ENCODE measurements at regions of chr1 and their contacts with region 1.

Region 1: DNA sequence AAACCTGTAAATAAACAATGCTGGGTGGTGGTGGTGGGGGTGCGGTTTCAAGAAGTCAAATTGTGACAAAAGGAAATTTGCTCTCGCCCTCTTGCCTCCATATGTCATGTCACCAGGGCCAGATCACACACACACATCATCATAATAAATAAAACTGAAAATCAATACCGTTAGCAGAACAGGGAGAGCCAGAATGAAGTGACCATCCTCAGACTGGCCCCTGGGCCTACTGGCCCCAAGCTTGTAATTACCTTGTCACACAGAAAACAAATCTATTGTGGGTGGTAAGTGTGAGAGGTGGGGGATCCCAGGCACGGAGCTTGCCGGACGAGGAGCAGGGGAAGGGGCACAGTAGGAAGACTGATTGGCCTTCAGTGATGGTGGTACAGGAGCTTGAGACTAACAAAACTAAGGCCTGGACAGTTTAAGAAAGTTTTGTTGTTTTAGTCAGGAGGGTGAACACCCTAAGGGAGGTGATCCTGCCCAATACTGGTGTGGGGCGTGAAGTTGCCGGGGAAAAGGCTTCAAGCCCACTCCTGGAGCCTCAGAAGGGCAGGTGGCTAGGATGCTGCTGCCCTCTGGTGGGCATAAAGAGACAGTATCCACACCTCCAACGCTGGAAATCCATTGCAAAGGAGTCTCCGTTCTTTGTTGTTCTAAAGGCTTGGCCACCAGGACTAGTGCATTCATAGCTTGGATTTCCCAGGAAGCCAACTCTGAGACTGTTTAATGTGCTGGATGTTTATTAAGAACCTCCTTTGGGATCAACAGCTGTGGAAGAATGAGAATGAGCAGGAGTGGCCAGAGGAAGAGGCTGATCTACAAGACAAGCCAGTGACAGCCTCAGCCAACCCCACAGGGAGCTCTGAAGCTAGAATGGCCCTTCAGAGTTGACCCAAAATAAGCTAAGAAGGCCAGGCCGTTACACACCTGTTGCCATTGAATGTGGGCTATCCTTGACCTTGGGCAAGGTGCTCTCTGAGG is 8.1 kb upstream of the C1orf216 start:
- DNase-seq: peak; percentile 43 to 59 (median 57)
- H3K4me3 ChIP-seq: no peak overlapping the region
- H3K4me3 Mint-ChIP-seq: no peak overlapping the region
- H3K27ac ChIP-seq: no peak overlapping the region
- H3K27ac Mint-ChIP-seq: peak overlapping the region in 2 of 7 donors; percentile 35 to 37
- H3K4me1 ChIP-seq: peaks cover 4% of the 10 kb centered on the region
- H3K4me1 Mint-ChIP-seq: peaks cover 0 to 6% (median 4%) of the 10 kb centered on the region in 4 donors
- H3K27me3 ChIP-seq: no peaks in the 10 kb centered on the region
- H3K27me3 Mint-ChIP-seq: no peaks in the 10 kb centered on the region

Region 2: DNA sequence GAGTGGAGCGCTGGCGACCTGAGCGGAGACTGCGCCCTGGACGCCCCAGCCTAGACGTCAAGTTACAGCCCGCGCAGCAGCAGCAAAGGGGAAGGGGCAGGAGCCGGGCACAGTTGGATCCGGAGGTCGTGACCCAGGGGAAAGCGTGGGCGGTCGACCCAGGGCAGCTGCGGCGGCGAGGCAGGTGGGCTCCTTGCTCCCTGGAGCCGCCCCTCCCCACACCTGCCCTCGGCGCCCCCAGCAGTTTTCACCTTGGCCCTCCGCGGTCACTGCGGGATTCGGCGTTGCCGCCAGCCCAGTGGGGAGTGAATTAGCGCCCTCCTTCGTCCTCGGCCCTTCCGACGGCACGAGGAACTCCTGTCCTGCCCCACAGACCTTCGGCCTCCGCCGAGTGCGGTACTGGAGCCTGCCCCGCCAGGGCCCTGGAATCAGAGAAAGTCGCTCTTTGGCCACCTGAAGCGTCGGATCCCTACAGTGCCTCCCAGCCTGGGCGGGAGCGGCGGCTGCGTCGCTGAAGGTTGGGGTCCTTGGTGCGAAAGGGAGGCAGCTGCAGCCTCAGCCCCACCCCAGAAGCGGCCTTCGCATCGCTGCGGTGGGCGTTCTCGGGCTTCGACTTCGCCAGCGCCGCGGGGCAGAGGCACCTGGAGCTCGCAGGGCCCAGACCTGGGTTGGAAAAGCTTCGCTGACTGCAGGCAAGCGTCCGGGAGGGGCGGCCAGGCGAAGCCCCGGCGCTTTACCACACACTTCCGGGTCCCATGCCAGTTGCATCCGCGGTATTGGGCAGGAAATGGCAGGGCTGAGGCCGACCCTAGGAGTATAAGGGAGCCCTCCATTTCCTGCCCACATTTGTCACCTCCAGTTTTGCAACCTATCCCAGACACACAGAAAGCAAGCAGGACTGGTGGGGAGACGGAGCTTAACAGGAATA is 149.4 kb before region 1 on chr1:
- CTCF ChIA-PET with region 1: interaction called, 50 read pairs
- POLR2A ChIA-PET with region 1: interaction called, 5 read pairs
- intact Hi-C with region 1: no loop called
- DNase-seq: peak; percentile 61 to 76 (median 71)
- H3K4me3 ChIP-seq: peak overlapping the region; percentile 42 to 50
- H3K4me3 Mint-ChIP-seq: peak overlapping the region; percentile 82 to 96 (median 88)
- H3K27ac ChIP-seq: peak overlapping the region; percentile 58
- H3K27ac Mint-ChIP-seq: peak overlapping the region; percentile 32 to 93 (median 77)
- H3K4me1 ChIP-seq: peaks cover 28% of the 10 kb centered on the region
- H3K4me1 Mint-ChIP-seq: peaks cover 10 to 31% (median 20%) of the 10 kb centered on the region in 4 donors
- H3K27me3 ChIP-seq: no peaks in the 10 kb centered on the region
- H3K27me3 Mint-ChIP-seq: peaks cover 1 to 2% of the 10 kb centered on the region in 2 donors

Region 3: DNA sequence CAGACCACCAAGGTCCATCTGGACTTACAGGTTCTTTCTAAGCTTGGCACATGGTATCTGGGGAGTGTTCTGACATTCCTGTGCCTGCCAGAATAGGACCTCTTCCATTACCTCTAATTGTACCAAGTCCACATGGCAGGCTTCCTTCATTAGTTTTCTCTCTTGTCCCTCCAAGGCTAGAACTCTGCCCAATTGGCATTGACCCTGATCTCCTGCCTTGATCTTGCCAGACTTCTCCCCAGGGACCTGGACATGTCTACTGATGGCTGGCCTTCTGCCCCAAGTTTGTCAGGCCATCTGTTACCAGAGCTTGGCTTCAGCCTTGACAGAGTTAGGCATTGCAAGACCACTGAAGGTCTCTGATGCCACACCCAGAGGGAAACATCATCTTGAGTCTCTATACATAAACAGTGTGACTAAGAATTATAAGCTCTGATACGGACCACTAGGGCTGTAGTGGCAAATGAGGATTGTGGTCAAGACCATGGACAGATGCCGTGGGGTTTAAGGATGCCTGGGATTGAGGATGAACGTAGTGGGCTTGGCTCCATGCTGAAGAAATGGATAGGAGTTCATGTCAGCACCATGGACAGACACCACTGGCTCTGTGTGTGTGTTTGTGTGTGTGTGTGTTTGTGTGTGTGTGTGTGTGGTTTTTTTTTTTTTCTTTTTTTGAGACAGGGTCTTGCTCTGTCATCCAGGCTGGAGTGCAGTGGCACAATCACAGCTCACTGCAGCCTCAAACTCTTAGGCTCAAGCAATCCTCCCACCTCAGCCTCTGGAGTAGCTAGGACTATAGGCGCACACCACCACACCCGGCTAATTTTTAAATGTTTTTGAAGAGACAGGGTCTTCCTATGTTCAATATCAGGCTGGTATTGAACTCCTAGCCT is 65.9 kb before region 1 on chr1:
- CTCF ChIA-PET with region 1: no interaction called
- POLR2A ChIA-PET with region 1: no interaction called
- intact Hi-C with region 1: no loop called
- DNase-seq: no peak
- H3K4me3 ChIP-seq: no peak overlapping the region
- H3K4me3 Mint-ChIP-seq: no peak overlapping the region
- H3K27ac ChIP-seq: no peak overlapping the region
- H3K27ac Mint-ChIP-seq: peak overlapping the region in 1 of 7 donors; percentile 65
- H3K4me1 ChIP-seq: no peaks in the 10 kb centered on the region
- H3K4me1 Mint-ChIP-seq: peaks cover 0 to 3% (median under 1%) of the 10 kb centered on the region in 4 donors
- H3K27me3 ChIP-seq: no peaks in the 10 kb centered on the region
- H3K27me3 Mint-ChIP-seq: peaks cover 0 to 5% of the 10 kb centered on the region in 2 donors

Region 4: GRCh38 chr1:35715568-35716002 is 11.2 kb before region 1 on chr1:
- CTCF ChIA-PET with region 1: interaction called, 107 read pairs
- POLR2A ChIA-PET with region 1: interaction called, 3 read pairs
- intact Hi-C with region 1: no loop called
- DNase-seq: peak; percentile 67 to 75 (median 71)
- H3K4me3 ChIP-seq: no peak overlapping the region
- H3K4me3 Mint-ChIP-seq: peak overlapping the region in 7 of 8 donors; percentile 9 to 88 (median 72)
- H3K27ac ChIP-seq: no peak overlapping the region
- H3K27ac Mint-ChIP-seq: peak overlapping the region; percentile 2 to 88 (median 36)
- H3K4me1 ChIP-seq: peaks cover 33% of the 10 kb centered on the region
- H3K4me1 Mint-ChIP-seq: peaks cover 29 to 43% (median 33%) of the 10 kb centered on the region in 4 donors
- H3K27me3 ChIP-seq: no peaks in the 10 kb centered on the region
- H3K27me3 Mint-ChIP-seq: no peaks in the 10 kb centered on the region

Region 5: DNA sequence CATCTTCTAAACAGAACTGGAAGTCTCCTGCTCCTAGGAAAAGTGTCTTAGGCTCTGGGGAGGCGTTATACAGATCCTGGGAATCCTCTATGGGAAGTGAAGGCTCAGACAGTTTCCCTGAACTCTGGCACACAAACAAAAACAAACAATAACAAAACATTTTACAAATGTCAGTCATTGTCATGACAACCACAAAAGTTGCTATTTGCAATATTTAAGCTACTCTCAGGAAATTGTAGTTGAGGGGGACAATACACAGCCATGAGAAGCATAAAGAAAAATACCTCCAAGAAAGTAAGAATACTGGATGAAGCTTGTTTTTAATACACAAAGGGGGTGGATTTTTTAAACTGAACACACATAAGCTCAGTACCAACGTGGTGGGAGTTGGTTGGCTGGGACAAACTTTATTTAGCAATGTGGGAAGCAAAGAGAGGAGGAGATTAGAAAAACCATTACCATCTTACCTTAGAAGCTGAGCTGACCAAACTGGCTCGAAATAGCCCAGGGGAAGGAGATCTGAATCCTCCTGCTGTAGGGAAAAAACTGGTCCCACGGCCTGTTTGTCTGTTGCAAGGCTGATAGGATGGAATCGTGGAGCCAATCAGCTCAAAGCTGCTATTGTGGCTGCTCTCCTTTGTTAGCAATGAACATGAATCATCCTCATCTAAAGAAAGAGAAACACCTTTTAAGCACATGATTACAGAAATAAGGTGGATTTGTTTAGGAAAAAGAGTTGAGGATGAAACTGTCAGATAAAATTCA is 21.4 kb after region 1 on chr1:
- CTCF ChIA-PET with region 1: interaction called, 26 read pairs
- POLR2A ChIA-PET with region 1: no interaction called
- intact Hi-C with region 1: no loop called
- DNase-seq: no peak
- H3K4me3 ChIP-seq: no peak overlapping the region
- H3K4me3 Mint-ChIP-seq: no peak overlapping the region
- H3K27ac ChIP-seq: no peak overlapping the region
- H3K27ac Mint-ChIP-seq: peak overlapping the region in 1 of 7 donors; percentile 68
- H3K4me1 ChIP-seq: no peaks in the 10 kb centered on the region
- H3K4me1 Mint-ChIP-seq: no peaks in the 10 kb centered on the region
- H3K27me3 ChIP-seq: no peaks in the 10 kb centered on the region
- H3K27me3 Mint-ChIP-seq: no peaks in the 10 kb centered on the region

Region 6: DNA sequence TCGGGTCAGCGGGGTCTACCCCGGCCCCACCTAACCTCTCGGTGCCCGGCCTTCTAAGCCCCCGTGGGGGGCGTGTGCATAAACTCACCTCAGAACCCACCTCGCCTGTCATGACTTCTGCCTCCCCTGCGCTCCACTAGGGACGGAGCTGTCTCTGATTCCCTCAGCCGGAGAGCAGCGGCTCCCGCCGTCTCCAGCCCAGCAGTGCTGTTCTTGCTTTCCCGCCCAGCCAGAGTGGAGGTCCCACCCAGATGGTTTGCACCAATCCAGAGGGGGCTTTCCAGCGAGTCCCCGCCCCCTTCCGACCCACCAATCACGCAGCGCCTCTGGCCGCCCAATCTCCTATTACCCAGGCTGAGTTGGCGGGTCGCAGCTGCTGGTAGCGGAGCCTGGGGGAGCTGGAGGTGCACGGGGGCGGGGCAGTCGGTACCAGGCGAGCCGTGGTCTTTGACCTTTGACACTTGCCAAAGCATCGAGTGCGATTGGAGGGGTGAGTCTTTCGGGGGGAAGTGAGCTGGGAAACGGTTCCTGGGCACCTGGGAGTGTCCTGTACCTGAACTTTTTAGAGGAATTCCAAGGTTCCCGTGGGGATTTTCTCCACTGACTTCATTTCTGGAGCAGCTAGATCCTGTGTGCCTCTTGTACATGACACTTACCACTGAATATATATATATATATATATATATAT is 43.2 kb after region 1 on chr1 and contains the start of gene CLSPN:
- CTCF ChIA-PET with region 1: interaction called, 47 read pairs
- POLR2A ChIA-PET with region 1: no interaction called
- intact Hi-C with region 1: loop called (anchors 1 kb)
- DNase-seq: peak; percentile 90 to 94 (median 92)
- H3K4me3 ChIP-seq: peak within 1 kb of the TSS; percentile 74 to 84
- H3K4me3 Mint-ChIP-seq: peak within 1 kb of the TSS; percentile 95 to 99 (median 98)
- H3K27ac ChIP-seq: peak within 1 kb of the TSS; percentile 82
- H3K27ac Mint-ChIP-seq: peak within 1 kb of the TSS; percentile 86 to 97 (median 96)
- H3K4me1 ChIP-seq: peaks cover 7% of the 10 kb centered on the region
- H3K4me1 Mint-ChIP-seq: peaks cover 6 to 17% (median 10%) of the 10 kb centered on the region in 4 donors
- H3K27me3 ChIP-seq: no peaks in the 10 kb centered on the region
- H3K27me3 Mint-ChIP-seq: no peaks in the 10 kb centered on the region
- total RNA-seq, gene CLSPN: 0.28 to 0.90 TPM

Measured in CD4-positive, alpha-beta memory T cell (primary cell).